Mammary epithelial cell (primary cell): ENCODE measurements at regions of chr12 and their contacts with region 1.

Region 1: DNA sequence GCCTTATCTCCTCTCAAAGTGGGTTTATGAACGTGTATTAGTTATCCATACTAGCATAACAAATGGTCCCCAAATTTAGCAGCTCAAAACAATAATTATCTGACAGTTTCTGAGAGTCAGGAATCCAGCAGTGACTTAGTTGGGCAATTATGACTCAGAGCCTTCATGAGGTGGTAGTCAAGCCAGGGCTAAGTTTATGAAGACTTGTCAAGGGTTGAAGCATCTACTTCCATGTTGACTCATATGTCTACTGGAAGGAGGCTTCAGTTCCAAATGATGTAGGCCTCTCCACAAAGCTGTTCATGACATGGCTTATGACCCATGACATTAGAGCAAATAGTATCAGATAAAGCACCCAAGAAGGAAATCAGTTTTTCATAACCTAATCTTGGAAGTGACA is 73.2 kb downstream of the IPO8 start:
- DNase-seq: peak; percentile 66
- H3K4me3 ChIP-seq: no peak overlapping the region
- H3K27ac ChIP-seq: no peak overlapping the region
- H3K4me1 ChIP-seq: no peaks in the 10 kb centered on the region
- H3K27me3 ChIP-seq: no peaks in the 10 kb centered on the region
- CTCF ChIP-seq: no peak

Region 2: GRCh38 chr12:30257618-30258017 is 364.9 kb before region 1 on chr12:
- CTCF ChIA-PET with region 1: no interaction called
- dilution Hi-C with region 1: no loop called
- in situ Hi-C with region 1: no loop called
- intact Hi-C with region 1: no loop called
- DNase-seq: no peak
- H3K4me3 ChIP-seq: no peak overlapping the region
- H3K27ac ChIP-seq: no peak overlapping the region
- H3K4me1 ChIP-seq: no peaks in the 10 kb centered on the region
- H3K27me3 ChIP-seq: peaks cover 3% of the 10 kb centered on the region
- CTCF ChIP-seq: no peak

Region 3: GRCh38 chr12:30308011-30308705 is 314.4 kb before region 1 on chr12:
- CTCF ChIA-PET with region 1: no interaction called
- dilution Hi-C with region 1: no loop called
- in situ Hi-C with region 1: no loop called
- intact Hi-C with region 1: no loop called
- DNase-seq: peak; percentile 29
- H3K4me3 ChIP-seq: no peak overlapping the region
- H3K27ac ChIP-seq: no peak overlapping the region
- H3K4me1 ChIP-seq: peaks cover 6% of the 10 kb centered on the region
- H3K27me3 ChIP-seq: no peaks in the 10 kb centered on the region
- CTCF ChIP-seq: no peak

Region 4: DNA sequence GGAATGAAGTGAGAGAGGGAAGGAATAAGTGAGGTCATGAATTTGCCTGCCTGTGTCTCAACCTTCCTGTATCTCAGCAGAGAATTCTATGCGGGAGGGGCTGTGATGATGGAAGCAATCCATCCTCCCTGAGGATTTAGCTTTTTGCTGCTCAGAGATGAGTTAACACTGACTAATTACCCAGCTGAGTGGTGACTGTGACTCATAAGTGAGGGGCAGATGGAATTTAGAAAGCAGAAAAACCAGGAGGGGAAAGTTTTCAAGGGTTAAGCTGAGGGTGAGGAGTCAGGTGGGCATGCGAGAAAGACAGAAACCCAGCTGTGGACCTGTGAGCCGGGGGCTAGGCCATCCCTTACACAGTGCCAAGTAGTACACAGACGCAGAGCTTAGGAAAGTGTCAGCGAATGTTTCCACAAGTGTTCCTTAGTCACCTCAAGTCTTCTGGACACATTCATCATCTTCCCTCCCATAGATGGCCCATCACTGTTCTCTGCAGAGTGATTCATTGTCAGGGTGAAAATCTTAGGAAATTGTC is 204.7 kb before region 1 on chr12:
- CTCF ChIA-PET with region 1: interaction called, 11 read pairs
- dilution Hi-C with region 1: no loop called
- in situ Hi-C with region 1: no loop called
- intact Hi-C with region 1: no loop called
- DNase-seq: peak; percentile 98
- H3K4me3 ChIP-seq: peak overlapping the region in 1 of 3 experiments; percentile 27
- H3K27ac ChIP-seq: peak overlapping the region; percentile 92
- H3K4me1 ChIP-seq: peaks cover 57% of the 10 kb centered on the region
- H3K27me3 ChIP-seq: no peaks in the 10 kb centered on the region
- CTCF ChIP-seq: no peak